ENCODE measurements at regions of chr10 and their contacts with region 1.

Region 1: DNA sequence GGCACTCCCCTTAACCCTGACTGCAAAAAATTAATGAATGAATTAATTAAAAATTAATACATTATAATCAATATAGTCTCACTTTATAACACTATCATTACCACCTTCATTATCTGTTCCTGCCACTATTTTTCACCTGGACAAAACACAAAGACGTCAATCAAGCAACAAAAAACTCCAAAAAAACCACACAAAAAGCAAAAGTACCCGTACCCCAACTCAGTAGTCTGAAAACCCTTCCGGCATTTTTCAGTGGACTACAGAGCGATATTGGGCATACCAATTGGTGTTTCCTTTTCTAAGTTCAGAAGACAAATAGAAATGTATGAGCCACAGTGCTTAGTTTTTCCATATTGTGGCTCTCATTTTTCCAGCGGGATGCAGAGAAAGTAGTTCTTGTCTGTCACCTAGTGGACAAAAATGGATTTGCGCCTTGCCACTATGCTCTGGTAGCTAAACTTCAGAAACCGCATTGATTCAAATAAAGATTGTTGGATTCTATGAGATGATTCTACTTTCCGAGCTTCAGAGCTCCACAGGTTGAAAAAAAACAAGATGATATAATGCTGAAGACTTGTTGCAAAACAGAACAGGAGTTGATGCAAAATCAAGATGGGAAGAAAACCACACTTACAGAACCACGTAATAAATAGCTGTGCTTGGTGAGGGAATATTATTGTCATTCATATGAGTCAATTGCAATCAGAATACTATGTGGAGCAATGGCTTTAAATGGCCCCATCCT is 50.6 kb upstream of the ITGB1 start:
- DNase-seq: peak in 1 of 3 donors; percentile 92
- ATAC-seq: peak; percentile 61
- H3K4me3 ChIP-seq: no peak overlapping the region
- H3K4me1 ChIP-seq: peaks cover 8% of the 10 kb centered on the region
- CTCF ChIP-seq: peak; percentile 95

Region 2: DNA sequence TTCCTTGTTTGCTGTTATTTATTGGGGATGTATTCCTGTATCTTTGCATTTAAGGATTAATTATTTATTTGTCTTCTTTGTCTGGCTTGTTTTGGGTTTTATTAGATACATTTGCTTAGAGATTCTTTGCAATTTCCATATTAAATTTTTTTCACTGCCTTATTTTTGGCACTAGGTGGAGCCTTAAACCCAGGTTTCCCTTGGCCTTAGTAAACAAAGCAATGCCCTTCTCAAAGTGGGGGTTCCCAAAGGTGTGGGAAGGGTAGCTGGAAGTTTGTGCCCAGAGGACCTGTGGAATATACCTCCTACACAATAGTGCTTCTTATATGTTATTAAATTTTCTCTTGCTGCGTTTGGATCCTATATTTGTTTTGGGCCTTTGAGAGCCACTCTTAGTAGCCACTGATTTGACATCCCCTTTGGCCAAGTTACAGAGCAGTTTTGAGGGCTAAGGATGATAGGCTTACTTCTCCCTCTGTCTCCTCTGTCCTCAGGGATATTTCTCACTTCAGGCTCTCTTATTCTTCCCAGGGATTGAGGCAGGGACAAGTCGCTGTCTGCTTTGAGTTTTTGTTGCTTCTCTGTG is 213.0 kb before region 1 on chr10:
- intact Hi-C with region 1: loop called (anchors 2 to 5 kb)
- DNase-seq: peak in 1 of 3 donors; percentile 15
- ATAC-seq: no peak
- H3K4me3 ChIP-seq: no peak overlapping the region
- H3K4me1 ChIP-seq: no peaks in the 10 kb centered on the region
- CTCF ChIP-seq: peak; percentile 38

Region 3: GRCh38 chr10:32938554-32939061 is 70.1 kb before region 1 on chr10:
- intact Hi-C with region 1: no loop called
- DNase-seq: peak; percentile 52 to 57 (median 56)
- ATAC-seq: peak; percentile 85
- H3K4me3 ChIP-seq: no peak overlapping the region
- H3K4me1 ChIP-seq: peaks cover 40% of the 10 kb centered on the region
- CTCF ChIP-seq: no peak

Region 4: GRCh38 chr10:32958085-32959005 is 50.3 kb before region 1 on chr10 and contains the start of gene ITGB1:
- intact Hi-C with region 1: loop called in 1 of 2 experiments (anchors 10 kb)
- DNase-seq: peak; percentile 95 to 98 (median 97)
- ATAC-seq: peak; percentile 94
- H3K4me3 ChIP-seq: peak within 1 kb of the TSS; percentile 93
- H3K4me1 ChIP-seq: peaks cover 17% of the 10 kb centered on the region
- CTCF ChIP-seq: no peak
- total RNA-seq, gene ITGB1: 268 to 515 (median 274) TPM